Calu3 (cell line): ENCODE measurements at regions of chr20 and their contacts with region 1.

Region 1: GRCh38 chr20:362271-363254 is 15.7 kb downstream of the NRSN2 start:
- DNase-seq: peak; percentile 95
- H3K4me3 Mint-ChIP-seq: peak overlapping the region; percentile 12
- H3K27ac Mint-ChIP-seq: peak overlapping the region; percentile 80
- H3K4me1 Mint-ChIP-seq: peaks cover 51% of the 10 kb centered on the region
- H3K27me3 Mint-ChIP-seq: no peaks in the 10 kb centered on the region
- CTCF ChIP-seq: peak; percentile 45

Region 2: DNA sequence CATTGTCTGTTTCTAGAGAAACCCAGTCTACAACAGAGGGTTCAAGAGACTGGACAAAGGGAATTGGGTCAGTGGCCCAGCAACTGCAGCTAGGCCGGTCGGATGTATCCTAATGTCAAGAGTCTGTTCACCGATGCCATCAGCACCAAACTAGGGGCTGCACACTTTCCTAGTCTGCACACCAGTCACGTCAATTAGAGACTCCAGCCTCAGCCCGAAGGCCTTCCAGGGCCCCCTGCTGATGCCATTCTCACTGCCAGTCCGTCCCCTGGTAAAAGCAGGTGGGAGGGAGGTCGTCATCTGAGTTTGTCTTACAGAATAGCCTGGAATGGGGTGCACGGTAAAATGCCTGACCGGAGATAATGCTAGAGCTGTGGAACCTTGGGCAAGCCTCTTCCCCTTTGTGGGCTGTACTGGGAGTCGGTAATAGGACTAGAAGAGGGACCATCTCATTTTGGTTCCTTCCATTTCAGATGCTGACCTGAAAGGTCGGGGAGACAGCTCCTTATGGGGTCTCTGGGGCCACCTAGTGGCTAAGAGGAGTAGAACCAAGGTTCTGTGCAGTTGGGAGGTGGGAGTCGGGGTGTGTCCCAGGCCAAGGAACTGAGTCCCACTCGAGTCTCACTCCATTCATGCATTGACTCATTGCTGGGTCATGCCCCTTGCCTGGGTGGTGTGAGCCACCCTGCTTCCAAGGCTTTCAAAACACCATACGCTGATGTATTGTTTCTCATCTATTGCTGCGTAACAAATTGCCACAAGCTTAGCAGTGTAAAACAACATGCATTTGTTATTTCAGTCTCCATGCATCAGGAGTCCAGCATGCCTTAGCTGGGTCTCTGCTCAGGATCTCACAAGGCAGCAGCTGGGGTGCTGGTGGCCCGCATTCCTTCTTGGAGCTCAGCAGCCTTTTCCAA is 32.1 kb before region 1 on chr20:
- CTCF ChIA-PET with region 1: no interaction called
- intact Hi-C with region 1: no loop called
- DNase-seq: peak; percentile 36
- H3K4me3 Mint-ChIP-seq: no peak overlapping the region
- H3K27ac Mint-ChIP-seq: no peak overlapping the region
- H3K4me1 Mint-ChIP-seq: peaks cover 13% of the 10 kb centered on the region
- H3K27me3 Mint-ChIP-seq: no peaks in the 10 kb centered on the region
- CTCF ChIP-seq: peak; percentile 53

Region 3: GRCh38 chr20:381581-382290 is 19.2 kb after region 1 on chr20:
- CTCF ChIA-PET with region 1: interaction called, 19 read pairs
- intact Hi-C with region 1: loop called (anchors 2 kb)
- DNase-seq: peak; percentile 72
- H3K4me3 Mint-ChIP-seq: peak overlapping the region; percentile 62
- H3K27ac Mint-ChIP-seq: peak overlapping the region; percentile 97
- H3K4me1 Mint-ChIP-seq: peaks cover 25% of the 10 kb centered on the region
- H3K27me3 Mint-ChIP-seq: no peaks in the 10 kb centered on the region
- CTCF ChIP-seq: no peak

Region 4: GRCh38 chr20:407133-407952 is 44.8 kb after region 1 on chr20:
- CTCF ChIA-PET with region 1: interaction called, 8 read pairs
- intact Hi-C with region 1: loop called (anchors 5 kb)
- DNase-seq: peak; percentile 71
- H3K4me3 Mint-ChIP-seq: peak overlapping the region; percentile 80
- H3K27ac Mint-ChIP-seq: peak overlapping the region; percentile 98
- H3K4me1 Mint-ChIP-seq: peaks cover 30% of the 10 kb centered on the region
- H3K27me3 Mint-ChIP-seq: no peaks in the 10 kb centered on the region
- CTCF ChIP-seq: peak; percentile 24

Region 5: DNA sequence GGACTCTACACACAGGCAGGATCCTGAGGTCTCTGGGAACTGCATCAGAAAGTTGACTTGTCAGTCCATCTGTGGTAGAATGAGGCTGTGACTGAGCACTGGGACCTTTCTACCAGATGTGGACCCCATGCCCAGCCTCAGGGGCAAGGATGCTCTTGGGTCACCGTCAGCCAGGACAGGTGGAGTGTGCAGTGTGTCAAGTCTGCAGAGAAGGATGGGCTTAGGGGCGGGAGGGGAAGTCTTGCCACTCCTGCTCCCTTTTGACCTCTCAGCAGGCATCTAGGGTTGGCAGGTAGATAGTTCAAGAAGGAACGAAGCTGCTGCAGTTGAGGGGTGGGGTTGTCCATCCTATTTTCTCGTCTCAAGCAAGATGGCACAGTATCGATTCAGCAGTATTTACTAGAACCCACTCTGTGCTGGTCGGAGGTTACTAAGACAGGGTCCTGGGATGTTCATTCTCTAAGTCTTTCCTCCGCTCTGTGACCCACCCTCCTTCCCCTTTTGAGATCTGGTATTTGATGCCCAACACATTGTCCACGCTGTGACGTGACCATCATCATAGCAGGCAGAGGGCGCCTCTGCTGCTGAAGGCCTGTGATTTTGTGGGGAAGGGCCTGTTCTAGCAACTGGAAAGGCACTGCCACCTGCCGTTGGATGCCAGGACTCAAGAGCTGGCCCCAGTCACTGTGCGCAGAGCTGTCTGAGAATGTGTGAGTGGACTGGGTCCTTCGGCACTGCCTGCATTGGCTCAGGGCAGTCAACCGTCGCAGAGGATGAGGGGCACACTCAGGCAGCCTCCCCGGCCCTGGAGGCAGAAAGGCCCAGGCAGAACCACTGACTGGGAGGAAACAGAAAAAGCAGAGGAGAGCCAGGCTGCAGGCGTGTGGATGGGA is 68.7 kb after region 1 on chr20:
- CTCF ChIA-PET with region 1: interaction called, 15 read pairs
- intact Hi-C with region 1: loop called (anchors 1 kb)
- DNase-seq: peak; percentile 66
- H3K4me3 Mint-ChIP-seq: no peak overlapping the region
- H3K27ac Mint-ChIP-seq: no peak overlapping the region
- H3K4me1 Mint-ChIP-seq: peaks cover 9% of the 10 kb centered on the region
- H3K27me3 Mint-ChIP-seq: no peaks in the 10 kb centered on the region
- CTCF ChIP-seq: peak; percentile 50